A673 (cell line): ENCODE measurements at regions of chr2 and their contacts with region 1.

Region 1: DNA sequence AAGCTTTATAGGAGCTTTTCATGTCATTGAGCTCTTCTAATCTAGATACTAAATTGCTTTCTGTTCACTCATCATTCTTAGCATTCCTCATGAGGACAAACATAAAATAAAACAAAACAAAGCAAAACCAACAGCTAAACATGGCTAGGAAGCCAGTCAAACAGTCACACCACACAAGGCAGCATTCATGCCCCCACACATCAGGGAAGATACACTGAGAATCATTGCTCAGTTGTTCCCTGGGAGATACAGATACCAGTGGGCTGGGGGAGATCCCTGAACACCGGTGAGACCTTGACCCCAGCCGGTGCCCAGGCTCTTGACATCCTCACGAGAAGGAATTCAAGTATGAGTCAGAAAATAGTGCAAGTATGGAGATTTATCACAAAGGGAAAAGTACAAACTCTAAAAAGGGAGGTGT is 177.9 kb upstream of the ARL4C start:
- DNase-seq: no peak
- H3K4me3 ChIP-seq: no peak overlapping the region
- H3K27ac ChIP-seq: no peak overlapping the region
- H3K4me1 ChIP-seq: no peaks in the 10 kb centered on the region
- H3K27me3 ChIP-seq: no peaks in the 10 kb centered on the region
- CTCF ChIP-seq: no peak

Region 2: GRCh38 chr2:234579231-234579962 is 95.4 kb before region 1 on chr2:
- CTCF ChIA-PET with region 1: no interaction called
- POLR2A ChIA-PET with region 1: interaction called, 13 read pairs
- intact Hi-C with region 1: no loop called
- DNase-seq: no peak
- H3K4me3 ChIP-seq: no peak overlapping the region
- H3K27ac ChIP-seq: no peak overlapping the region
- H3K4me1 ChIP-seq: peaks cover 10% of the 10 kb centered on the region
- H3K27me3 ChIP-seq: no peaks in the 10 kb centered on the region
- CTCF ChIP-seq: no peak

Region 3: DNA sequence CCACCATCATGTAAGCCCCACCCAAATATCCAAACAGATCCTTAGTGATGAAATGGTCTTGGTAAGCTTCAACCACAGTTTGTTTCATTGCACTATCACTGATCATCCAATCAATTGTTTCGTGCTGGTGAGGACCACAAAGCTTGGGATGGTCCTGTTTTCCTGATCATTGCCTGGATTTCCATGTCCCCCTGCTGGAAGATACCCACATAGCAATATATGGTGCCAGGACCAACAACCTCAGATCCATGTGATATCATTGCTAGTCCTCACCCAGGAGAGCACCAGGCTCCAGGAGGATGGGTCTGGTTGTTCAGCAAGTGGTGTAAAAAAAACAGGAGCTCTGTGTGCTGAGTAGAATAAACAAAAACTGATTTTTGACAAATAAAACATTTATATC is 70.6 kb after region 1 on chr2:
- CTCF ChIA-PET with region 1: interaction called, 13 read pairs
- POLR2A ChIA-PET with region 1: no interaction called
- intact Hi-C with region 1: no loop called
- DNase-seq: no peak
- H3K4me3 ChIP-seq: no peak overlapping the region
- H3K27ac ChIP-seq: no peak overlapping the region
- H3K4me1 ChIP-seq: no peaks in the 10 kb centered on the region
- H3K27me3 ChIP-seq: no peaks in the 10 kb centered on the region
- CTCF ChIP-seq: peak; percentile 35; the same call in 1 of the 2 replicates

Region 4: DNA sequence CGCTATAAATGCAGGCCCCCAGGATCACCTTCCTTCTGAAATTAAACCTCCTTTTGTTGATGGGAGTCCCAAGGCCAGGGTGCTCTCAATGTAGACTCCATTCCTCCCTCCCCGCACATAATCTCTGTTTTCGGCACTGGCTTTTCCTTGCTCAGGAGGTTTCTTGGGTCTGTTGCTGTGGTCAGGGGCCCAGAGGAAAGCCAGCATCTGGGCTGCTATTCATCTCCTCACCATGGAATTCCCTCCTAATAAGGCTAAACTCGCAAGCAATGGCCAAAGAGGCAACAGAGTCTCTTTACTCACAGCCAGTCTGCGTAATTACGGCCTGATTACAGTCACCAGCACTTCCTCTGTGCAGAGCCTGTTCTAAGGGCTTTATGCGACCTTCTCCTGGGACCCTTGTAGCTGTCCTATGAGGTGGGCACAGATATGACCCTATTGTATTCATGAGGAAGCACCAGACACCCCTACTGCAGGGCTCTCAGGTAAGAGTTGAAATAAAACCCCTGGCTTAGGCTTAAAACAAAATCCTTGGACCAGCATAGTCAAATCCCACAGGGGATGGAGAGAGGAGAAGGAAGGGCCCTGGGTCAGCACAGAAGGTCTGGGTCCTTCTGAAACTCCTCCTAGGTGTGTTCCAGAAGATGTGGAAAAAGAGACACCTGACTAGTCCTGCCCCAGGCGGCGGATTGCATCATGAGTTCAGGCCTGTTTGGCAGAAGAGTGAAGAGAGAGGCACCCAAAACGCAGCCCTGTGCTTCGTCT is 172.0 kb after region 1 on chr2:
- CTCF ChIA-PET with region 1: no interaction called
- POLR2A ChIA-PET with region 1: no interaction called
- intact Hi-C with region 1: no loop called
- DNase-seq: no peak
- H3K4me3 ChIP-seq: no peak overlapping the region
- H3K27ac ChIP-seq: no peak overlapping the region
- H3K4me1 ChIP-seq: peaks cover 3% of the 10 kb centered on the region
- H3K27me3 ChIP-seq: no peaks in the 10 kb centered on the region
- CTCF ChIP-seq: no peak